Gastrocnemius medialis (tissue), 4 donors: ENCODE measurements at regions of chr5 and their contacts with region 1.

Region 1: DNA sequence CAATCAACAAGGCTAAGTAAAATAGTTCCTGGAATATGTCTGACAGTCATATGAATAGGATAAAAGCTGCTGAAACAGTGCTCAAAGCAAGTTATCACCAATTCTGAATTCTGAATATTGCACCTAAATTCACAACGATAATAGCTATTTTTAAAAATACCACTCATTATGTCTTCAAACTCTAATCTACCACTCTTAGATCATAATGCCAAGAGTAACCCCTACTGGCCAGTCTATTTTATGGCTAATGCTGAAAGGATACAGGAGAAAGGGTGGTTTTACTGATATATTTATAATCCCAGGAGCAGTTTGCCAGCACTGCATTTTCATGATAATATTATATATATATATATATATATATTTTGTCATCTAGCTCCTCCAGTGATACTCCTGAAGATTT is 232.8 kb downstream of the PDE4D start:
- DNase-seq: no peak
- ATAC-seq: peak in 1 of 2 donors; percentile 48
- H3K4me3 ChIP-seq: no peak overlapping the region
- H3K27ac ChIP-seq: peak overlapping the region; percentile 69 to 82 (median 80)
- H3K4me1 ChIP-seq: peaks cover 72% of the 10 kb centered on the region in 2 donors
- H3K27me3 ChIP-seq: no peaks in the 10 kb centered on the region
- CTCF ChIP-seq: peak; percentile 18 to 56 (median 31)
- POLR2A ChIP-seq: no peak

Region 2: GRCh38 chr5:59390074-59390659 is 270.6 kb before region 1 on chr5:
- in situ Hi-C with region 1: loop called in 1 of 4 experiments (anchors 5 kb)
- intact Hi-C with region 1: loop called (anchors 2 kb)
- DNase-seq: no peak
- ATAC-seq: no peak
- H3K4me3 ChIP-seq: no peak overlapping the region
- H3K27ac ChIP-seq: peak overlapping the region in 2 of 4 donors; percentile 33 to 43
- H3K4me1 ChIP-seq: peaks cover 6 to 20% of the 10 kb centered on the region in 2 donors
- H3K27me3 ChIP-seq: no peaks in the 10 kb centered on the region
- CTCF ChIP-seq: peak; percentile 51 to 74 (median 70)
- POLR2A ChIP-seq: no peak

Region 3: GRCh38 chr5:59506285-59506877 is 154.4 kb before region 1 on chr5:
- in situ Hi-C with region 1: loop called in 3 of 4 experiments (anchors 10 kb)
- intact Hi-C with region 1: no loop called
- DNase-seq: no peak
- ATAC-seq: no peak
- H3K4me3 ChIP-seq: no peak overlapping the region
- H3K27ac ChIP-seq: peak overlapping the region in 3 of 4 donors; percentile 12 to 60 (median 57)
- H3K4me1 ChIP-seq: peaks cover 31 to 39% of the 10 kb centered on the region in 2 donors
- H3K27me3 ChIP-seq: no peaks in the 10 kb centered on the region
- CTCF ChIP-seq: peak; percentile 28 to 60 (median 50)
- POLR2A ChIP-seq: no peak

Region 4: DNA sequence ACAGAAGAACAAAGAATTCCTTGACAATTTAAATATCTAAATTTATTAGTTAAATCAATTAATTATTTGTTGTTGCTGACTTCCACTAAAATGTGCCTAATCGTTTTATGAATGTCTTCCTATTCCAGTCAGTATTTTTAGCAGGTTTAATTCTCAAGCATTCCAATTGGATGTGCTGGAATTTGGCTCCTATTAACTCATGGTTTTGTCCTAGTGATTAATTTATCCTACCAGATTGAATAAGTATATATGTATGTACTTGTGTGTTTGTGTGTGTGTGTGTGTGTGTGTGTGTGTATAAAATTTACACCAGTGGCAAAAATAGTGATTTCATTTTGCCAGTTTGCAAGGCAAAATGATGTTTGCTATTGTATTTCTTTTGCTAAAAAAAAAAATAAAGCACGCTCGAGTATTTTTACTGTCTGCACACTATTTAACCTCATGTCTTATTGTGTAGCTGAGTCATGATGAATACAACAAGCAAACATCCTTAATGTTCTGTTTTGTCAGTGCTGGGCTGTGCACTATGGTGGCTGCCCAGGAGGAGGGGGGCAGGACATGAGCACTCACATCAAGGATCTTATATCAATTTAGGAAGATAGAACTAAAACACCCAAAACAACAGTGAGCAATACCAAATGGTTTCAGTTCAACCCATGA is 142.7 kb before region 1 on chr5:
- in situ Hi-C with region 1: loop called in 1 of 4 experiments (anchors 10 kb)
- intact Hi-C with region 1: no loop called
- DNase-seq: no peak
- ATAC-seq: peak in 1 of 2 donors; percentile 57
- H3K4me3 ChIP-seq: no peak overlapping the region
- H3K27ac ChIP-seq: peak overlapping the region; percentile 37 to 74 (median 58)
- H3K4me1 ChIP-seq: peaks cover 25 to 32% of the 10 kb centered on the region in 2 donors
- H3K27me3 ChIP-seq: no peaks in the 10 kb centered on the region
- CTCF ChIP-seq: no peak
- POLR2A ChIP-seq: no peak

Region 5: DNA sequence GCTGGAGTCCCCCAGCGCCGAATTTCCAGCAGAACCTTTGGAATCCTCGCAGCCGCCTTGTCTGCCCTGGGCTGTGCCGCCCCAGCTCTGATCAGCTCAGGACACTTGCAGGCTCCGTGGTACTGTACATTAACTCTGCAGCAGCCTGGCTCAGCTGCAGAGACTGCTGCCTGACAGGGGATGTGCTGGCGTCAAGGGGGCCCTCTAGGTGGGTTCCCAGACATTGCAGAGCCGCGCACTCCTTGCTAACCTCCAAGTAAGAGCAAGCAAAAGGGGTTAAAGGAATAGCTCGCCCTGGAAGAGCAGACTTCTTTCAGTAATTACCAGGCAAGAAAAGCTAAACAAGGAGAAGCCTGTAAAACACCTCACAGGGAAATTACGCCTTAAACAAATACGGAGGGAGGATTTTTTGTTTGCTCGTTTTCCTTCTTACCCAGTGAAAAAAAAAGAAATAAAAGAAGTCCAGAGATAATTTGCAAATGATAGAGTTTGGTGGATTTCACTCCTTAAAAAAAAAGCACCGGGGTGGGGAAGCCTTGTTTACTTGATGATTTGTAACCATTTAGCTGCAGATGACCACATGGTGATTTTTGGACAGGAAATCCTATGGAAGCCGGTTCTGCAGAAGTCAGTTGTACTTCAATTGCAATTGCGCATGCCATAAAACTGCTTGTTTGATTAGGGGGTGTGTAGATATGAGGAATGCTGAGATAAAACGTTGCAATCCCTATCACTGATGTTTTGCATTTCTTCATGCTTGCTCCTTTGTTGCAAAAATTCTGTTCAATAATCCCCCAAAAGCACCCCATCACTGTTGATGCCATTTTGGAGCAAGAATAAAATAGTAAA is 73.0 kb before region 1 on chr5:
- in situ Hi-C with region 1: loop called in 1 of 4 experiments (anchors 10 kb)
- intact Hi-C with region 1: loop called (anchors 2 kb)
- DNase-seq: peak; percentile 71 to 88
- ATAC-seq: peak; percentile 53 to 68
- H3K4me3 ChIP-seq: peak overlapping the region; percentile 63 to 74 (median 67)
- H3K27ac ChIP-seq: peak overlapping the region; percentile 78 to 92 (median 88)
- H3K4me1 ChIP-seq: peaks cover 8 to 28% of the 10 kb centered on the region in 2 donors
- H3K27me3 ChIP-seq: no peaks in the 10 kb centered on the region
- CTCF ChIP-seq: peak in 2 of 5 experiments; percentile 8 to 42
- POLR2A ChIP-seq: peak; percentile 60 to 84

Region 6: GRCh38 chr5:59620535-59621212 is 40.1 kb before region 1 on chr5:
- in situ Hi-C with region 1: no loop called
- intact Hi-C with region 1: loop called (anchors 2 kb)
- DNase-seq: no peak
- ATAC-seq: no peak
- H3K4me3 ChIP-seq: no peak overlapping the region
- H3K27ac ChIP-seq: peak overlapping the region in 3 of 4 donors; percentile 31 to 93 (median 92)
- H3K4me1 ChIP-seq: peaks cover 11 to 42% of the 10 kb centered on the region in 2 donors
- H3K27me3 ChIP-seq: no peaks in the 10 kb centered on the region
- CTCF ChIP-seq: no peak
- POLR2A ChIP-seq: no peak

Region 7: GRCh38 chr5:59759600-59760351 is 99.0 kb after region 1 on chr5:
- in situ Hi-C with region 1: no loop called
- intact Hi-C with region 1: no loop called
- DNase-seq: no peak
- ATAC-seq: no peak
- H3K4me3 ChIP-seq: no peak overlapping the region
- H3K27ac ChIP-seq: no peak overlapping the region
- H3K4me1 ChIP-seq: no peaks in the 10 kb centered on the region
- H3K27me3 ChIP-seq: no peaks in the 10 kb centered on the region
- CTCF ChIP-seq: no peak
- POLR2A ChIP-seq: no peak